ENCODE measurements at regions of chr5 and their contacts with region 1.

Region 1: GRCh38 chr5:173035904-173036707 is 20.0 kb upstream of the CREBRF start:
- DNase-seq: peak; percentile 62
- CTCF ChIP-seq: no peak

Region 2: DNA sequence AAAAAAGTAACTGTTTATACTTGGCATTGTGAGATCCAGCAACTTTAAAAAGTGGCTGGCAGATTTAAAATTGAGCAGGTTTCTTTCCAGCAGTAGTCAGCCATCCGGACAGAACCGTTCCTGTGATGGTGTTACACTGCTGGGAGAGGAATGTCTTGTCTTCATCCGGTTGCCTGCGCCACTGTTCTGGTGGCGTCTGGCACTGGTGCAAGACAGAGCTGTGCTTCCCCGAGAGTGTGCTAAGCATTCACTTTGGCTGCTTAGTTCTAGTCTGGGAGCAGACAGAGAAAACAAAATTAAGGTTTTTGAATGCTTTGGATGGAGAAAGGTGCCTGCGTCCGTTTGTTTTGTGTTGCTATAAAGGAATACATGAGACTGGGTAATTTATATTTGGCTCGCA is 15.5 kb before region 1 on chr5:
- CTCF ChIA-PET with region 1: interaction called, 12 read pairs
- POLR2A ChIA-PET with region 1: no interaction called
- DNase-seq: no peak
- CTCF ChIP-seq: no peak

Region 3: DNA sequence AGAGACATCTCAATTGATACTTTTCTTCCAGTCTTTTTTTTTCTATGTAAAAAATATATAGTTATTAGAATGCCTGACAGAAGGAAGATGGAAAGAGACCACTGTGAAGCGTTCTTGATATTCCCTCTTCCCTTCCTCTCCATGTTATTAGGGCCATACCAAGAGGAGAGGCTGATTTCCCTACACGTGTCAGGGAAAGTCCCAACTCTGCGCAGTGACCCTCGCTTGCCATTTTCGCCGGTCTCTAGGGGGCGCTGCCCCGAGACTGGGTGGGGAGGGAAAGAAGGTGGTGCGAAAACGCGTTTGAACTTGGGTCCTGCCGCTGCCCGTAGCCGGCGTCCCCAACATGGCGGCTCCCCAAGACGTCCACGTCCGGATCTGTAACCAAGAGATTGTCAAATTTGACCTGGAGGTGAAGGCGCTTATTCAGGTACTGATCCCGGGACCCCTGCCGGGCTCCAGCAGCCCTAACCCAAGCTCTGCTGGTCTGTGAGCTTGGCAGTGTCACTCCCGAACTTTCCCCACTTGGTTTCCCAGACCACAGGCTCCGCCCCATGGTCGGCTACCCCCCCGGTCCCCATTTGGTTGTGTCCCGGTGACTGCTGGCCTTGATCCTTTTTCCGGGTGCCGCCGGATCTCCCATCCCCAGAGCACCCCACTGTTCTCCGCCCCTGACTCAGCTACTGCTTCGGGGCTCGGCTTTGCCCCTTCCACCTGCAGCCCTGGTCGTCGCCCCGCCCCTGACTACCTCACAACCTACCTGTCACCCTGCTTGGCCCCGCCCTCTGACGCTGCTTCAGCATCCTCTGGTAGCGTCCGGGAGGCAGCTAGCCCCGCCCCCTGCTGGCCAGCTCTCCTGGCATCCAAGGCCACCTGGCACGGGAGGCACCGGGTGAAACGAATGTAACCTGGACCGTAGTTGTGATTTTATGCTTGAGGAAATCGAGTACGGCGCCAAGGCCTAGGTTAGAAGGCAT is 108.4 kb after region 1 on chr5 and contains the start of gene BNIP1:
- CTCF ChIA-PET with region 1: interaction called, 10 read pairs
- POLR2A ChIA-PET with region 1: no interaction called
- DNase-seq: peak; percentile 94
- CTCF ChIP-seq: peak; percentile 99

Measured in GM10248 (cell line).